ENCODE measurements at regions of chr5 and their contacts with region 1.

Region 1: DNA sequence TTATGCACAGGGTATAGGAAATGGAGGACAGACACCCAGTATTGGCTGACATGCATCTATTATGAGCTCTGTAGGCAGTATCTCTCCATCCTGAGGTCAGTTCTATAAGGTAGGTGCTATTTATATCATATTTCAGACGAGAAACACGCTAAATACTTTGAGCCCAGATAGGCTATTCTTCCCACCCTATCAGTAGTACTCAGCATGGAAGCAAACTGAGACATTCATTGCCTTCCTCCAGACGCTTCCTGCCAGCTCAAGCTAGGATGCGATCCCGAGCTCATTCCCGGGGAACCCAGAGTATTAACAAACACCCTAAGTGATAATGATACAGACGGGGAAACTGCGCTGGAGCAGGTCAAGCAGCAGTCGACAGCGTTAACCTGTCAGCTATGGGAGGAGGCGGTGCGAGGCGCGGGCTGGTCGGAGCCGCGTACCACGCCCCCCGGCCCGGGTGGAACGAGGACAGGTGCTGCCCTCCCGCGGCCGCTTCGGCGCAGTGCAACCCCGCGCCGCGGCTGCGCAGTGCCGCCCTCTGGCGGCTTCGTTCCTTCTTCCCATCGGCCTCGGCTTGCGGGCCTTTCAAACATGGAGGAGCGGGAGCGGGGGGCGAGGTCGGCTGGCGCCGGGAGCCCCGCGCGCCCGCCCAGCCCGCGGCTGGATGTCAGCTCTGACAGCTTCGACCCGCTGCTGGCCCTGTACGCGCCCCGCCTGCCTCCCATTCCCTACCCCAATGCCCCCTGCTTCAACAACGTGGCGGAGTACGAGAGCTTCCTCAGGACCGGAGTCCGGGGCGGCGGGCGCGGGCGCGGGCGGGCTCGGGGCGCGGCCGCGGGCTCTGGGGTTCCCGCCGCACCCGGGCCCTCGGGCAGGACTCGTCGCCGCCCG is at the start of gene LSM11:
- DNase-seq: peak; percentile 72
- ATAC-seq: peak; percentile 98
- H3K4me3 ChIP-seq: peak within 1 kb of the TSS; percentile 72
- H3K27ac ChIP-seq: peak within 1 kb of the TSS; percentile 52; the same call in 1 of the 2 replicates
- H3K4me1 ChIP-seq: peaks cover under 1% of the 10 kb centered on the region
- H3K27me3 ChIP-seq: no peaks in the 10 kb centered on the region
- CTCF ChIP-seq: peak; percentile 100; the same call in 1 of the 2 replicates
- POLR2A ChIP-seq: 0 out of 2 replicates have a peak, but pooled peaks have one; percentile 48
- RAD21 ChIP-seq: peak; percentile 86
- total RNA-seq, gene LSM11: 3.0 and 3.9 TPM in 2 replicates

Region 2: GRCh38 chr5:157142317-157143126 is 600.9 kb before region 1 on chr5 and contains the start of gene MED7:
- CTCF ChIA-PET with region 1: no interaction called
- POLR2A ChIA-PET with region 1: no interaction called
- dilution Hi-C with region 1: no loop called
- in situ Hi-C with region 1: loop called (anchors 10 kb)
- intact Hi-C with region 1: loop called (anchors 5 kb)
- DNase-seq: peak; percentile 100
- ATAC-seq: peak; percentile 99
- H3K4me3 ChIP-seq: peak within 1 kb of the TSS; percentile 84
- H3K27ac ChIP-seq: peak within 1 kb of the TSS; percentile 87
- H3K4me1 ChIP-seq: no peaks in the 10 kb centered on the region
- H3K27me3 ChIP-seq: no peaks in the 10 kb centered on the region
- CTCF ChIP-seq: no peak
- POLR2A ChIP-seq: peak; percentile 79
- RAD21 ChIP-seq: no peak
- total RNA-seq, gene MED7: 8.6 and 13.9 TPM in 2 replicates

Region 3: GRCh38 chr5:157148734-157149615 is 594.4 kb before region 1 on chr5:
- CTCF ChIA-PET with region 1: no interaction called
- POLR2A ChIA-PET with region 1: no interaction called
- dilution Hi-C with region 1: no loop called
- in situ Hi-C with region 1: loop called (anchors 10 kb)
- intact Hi-C with region 1: loop called (anchors 5 kb)
- DNase-seq: peak; percentile 60
- ATAC-seq: peak; percentile 93
- H3K4me3 ChIP-seq: no peak overlapping the region
- H3K27ac ChIP-seq: no peak overlapping the region
- H3K4me1 ChIP-seq: no peaks in the 10 kb centered on the region
- H3K27me3 ChIP-seq: no peaks in the 10 kb centered on the region; the same call in 1 of the 2 replicates
- CTCF ChIP-seq: peak; percentile 84
- POLR2A ChIP-seq: no peak
- RAD21 ChIP-seq: peak; percentile 68

Region 4: DNA sequence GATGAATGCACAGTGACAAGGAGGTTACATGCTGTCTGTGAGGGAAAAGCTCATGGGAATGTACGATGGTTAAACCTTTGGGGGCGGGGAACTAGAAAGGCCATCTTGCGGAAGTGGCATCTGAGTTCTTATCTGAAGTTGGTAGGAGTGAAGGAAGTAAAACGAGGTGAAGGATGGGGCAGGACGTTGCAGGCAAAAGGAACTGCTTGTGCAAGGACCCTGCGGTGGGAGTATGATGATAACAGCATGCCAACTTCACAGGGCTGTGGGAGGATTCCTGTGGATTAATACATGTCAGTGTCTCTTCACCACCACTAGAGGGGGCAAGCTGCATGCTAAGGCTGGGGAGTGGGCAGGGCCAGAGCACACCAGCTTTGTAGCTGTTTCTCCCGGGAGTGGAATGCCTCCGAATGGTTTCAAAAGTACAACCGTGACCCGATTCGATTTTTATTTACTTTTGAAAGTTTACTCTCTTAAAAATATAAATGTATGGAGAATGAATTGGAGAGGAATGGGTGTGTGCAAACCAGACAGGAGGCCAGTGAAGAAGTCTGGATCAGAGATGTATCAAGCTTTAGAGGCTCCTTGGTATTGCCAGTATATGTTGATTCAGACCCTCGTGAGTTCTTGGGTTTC is 415.0 kb before region 1 on chr5:
- CTCF ChIA-PET with region 1: interaction called, 4 read pairs
- POLR2A ChIA-PET with region 1: no interaction called
- dilution Hi-C with region 1: no loop called
- in situ Hi-C with region 1: loop called (anchors 10 kb)
- intact Hi-C with region 1: loop called (anchors 1 kb)
- DNase-seq: peak; percentile 81
- ATAC-seq: peak; percentile 100
- H3K4me3 ChIP-seq: peak overlapping the region; percentile 13; the same call in 1 of the 2 replicates
- H3K27ac ChIP-seq: no peak overlapping the region
- H3K4me1 ChIP-seq: no peaks in the 10 kb centered on the region
- H3K27me3 ChIP-seq: no peaks in the 10 kb centered on the region
- CTCF ChIP-seq: peak; percentile 97
- POLR2A ChIP-seq: peak; percentile 41; the same call in 1 of the 2 replicates
- RAD21 ChIP-seq: peak; percentile 98

Region 5: DNA sequence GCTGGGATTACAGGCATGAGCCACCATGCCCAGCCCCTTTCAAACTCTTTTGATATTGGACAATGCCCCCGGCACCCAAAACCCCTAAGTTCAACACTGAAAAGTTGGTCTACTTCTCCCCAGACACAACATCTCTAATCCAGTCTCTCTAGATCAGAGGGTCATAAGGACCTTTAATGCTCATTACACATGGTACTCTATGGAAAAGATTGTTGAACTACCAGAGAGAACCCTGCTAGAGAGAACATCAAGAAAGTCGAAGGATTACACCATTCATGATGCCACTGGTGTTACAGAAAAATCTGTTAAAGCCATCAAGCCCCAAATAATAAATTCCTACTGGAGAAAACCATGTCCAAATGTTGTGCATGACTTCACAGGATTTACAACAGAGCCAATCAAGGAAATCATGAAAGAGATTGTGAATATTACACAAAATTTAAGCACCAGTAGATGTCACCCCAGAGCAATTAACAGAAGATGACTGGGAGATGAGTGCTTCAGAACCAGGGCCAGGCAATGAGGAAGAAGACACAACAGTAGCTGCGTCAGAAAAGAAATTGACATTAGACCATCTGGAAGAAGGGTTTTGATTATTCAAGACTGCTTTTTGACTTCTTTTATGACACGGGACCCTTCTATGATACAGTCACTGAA is 311.7 kb before region 1 on chr5:
- CTCF ChIA-PET with region 1: no interaction called
- POLR2A ChIA-PET with region 1: no interaction called
- dilution Hi-C with region 1: no loop called
- in situ Hi-C with region 1: no loop called
- intact Hi-C with region 1: loop called (anchors 1 kb)
- DNase-seq: peak; percentile 69
- ATAC-seq: peak; percentile 98
- H3K4me3 ChIP-seq: no peak overlapping the region
- H3K27ac ChIP-seq: no peak overlapping the region
- H3K4me1 ChIP-seq: no peaks in the 10 kb centered on the region
- H3K27me3 ChIP-seq: no peaks in the 10 kb centered on the region
- CTCF ChIP-seq: peak; percentile 59
- POLR2A ChIP-seq: no peak
- RAD21 ChIP-seq: peak; percentile 65

Region 6: DNA sequence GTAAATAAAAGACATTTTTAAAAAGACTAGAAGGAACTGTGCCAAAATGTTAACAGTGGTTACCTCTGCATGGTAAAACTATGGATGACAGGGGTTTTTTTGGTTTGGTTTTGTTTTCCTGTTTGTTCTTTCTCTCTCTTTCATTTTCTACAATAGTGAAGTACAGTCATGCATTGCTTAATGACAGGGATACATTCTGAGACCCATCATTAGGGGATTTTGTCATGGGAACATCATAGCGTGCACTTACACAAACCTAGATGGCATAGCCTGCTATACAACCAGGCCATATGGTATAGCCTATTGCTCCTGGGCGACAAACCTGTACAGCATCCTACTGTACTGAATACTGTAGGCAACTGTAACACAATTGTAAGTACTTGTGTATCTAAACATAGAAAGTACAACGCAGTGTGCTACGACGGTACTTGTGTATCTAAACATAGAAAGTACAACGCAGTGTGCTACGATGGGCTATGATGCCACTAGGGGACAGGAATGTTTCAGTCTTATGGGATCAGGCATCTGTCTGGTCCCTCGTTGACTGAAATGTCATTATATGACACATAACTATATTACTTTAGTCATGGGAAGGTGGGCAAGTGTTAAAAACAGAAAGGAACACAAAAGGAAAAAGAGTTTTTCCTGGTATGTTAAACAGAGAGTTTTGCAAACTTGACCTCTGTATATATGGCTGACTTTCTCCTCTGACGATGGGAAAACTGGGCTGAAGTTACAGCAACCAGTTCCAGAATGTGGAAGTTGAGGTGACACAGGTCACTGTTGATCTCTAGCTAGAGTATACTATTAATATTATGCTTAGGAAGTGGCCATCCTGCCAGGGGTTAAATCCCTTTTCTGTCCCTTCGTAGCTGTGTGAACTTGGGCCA is 160.4 kb before region 1 on chr5:
- CTCF ChIA-PET with region 1: no interaction called
- POLR2A ChIA-PET with region 1: no interaction called
- dilution Hi-C with region 1: no loop called
- in situ Hi-C with region 1: no loop called
- intact Hi-C with region 1: no loop called
- DNase-seq: no peak
- ATAC-seq: no peak
- H3K4me3 ChIP-seq: no peak overlapping the region
- H3K27ac ChIP-seq: no peak overlapping the region
- H3K4me1 ChIP-seq: no peaks in the 10 kb centered on the region; the same call in 1 of the 2 replicates
- H3K27me3 ChIP-seq: no peaks in the 10 kb centered on the region
- CTCF ChIP-seq: no peak
- POLR2A ChIP-seq: no peak
- RAD21 ChIP-seq: no peak

Region 7: DNA sequence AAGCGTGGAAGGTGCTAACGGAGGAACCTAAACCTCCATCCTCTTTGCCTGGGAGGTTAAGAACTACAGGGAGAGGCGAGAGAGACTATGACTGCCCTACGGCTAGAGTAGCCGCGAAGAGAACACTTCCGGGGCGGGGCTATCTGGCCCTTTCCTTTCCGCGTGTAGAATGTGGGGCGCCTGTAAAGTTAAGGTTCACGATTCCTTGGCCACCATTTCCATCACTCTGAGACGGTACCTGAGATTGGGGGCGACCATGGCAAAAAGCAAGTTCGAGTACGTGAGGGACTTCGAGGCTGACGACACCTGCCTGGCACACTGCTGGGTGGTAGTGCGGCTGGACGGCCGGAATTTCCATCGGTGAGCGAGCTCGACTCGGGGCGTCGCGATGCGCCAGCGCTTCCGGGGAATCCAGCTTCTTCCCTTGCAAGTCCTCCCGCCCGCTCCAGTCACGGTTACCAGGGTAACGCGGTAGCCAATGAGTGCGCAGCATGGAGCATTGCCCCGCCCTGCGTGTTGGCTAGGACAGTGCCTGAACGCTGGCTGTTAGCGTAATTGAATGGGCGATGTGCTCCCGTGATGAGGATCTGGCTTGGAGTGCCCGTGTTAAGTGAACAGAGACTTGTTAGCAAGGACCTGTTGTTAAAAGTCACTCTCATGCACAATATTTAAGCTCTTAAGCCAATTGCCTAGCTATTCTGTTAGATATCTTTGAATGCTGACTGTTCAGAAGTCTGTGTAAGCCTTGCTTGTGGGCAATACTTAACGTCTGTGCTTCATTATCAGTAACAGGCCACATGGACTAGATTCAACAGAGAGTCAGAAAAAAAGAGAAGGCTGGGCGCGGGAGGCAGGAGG is 11.9 kb before region 1 on chr5 and contains the start of gene THG1L:
- CTCF ChIA-PET with region 1: interaction called, 14 read pairs
- POLR2A ChIA-PET with region 1: no interaction called
- dilution Hi-C with region 1: no loop called
- in situ Hi-C with region 1: no loop called
- intact Hi-C with region 1: no loop called
- DNase-seq: peak; percentile 97
- ATAC-seq: peak; percentile 99
- H3K4me3 ChIP-seq: peak within 1 kb of the TSS; percentile 65
- H3K27ac ChIP-seq: peak within 1 kb of the TSS; percentile 87
- H3K4me1 ChIP-seq: no peaks in the 10 kb centered on the region
- H3K27me3 ChIP-seq: no peaks in the 10 kb centered on the region
- CTCF ChIP-seq: no peak
- POLR2A ChIP-seq: peak; percentile 85
- RAD21 ChIP-seq: no peak
- total RNA-seq, gene THG1L: 20.4 and 32.5 TPM in 2 replicates

Measured in IMR-90 (cell line).